ENCODE measurements at regions of chr4 and their contacts with region 1.

Region 1: GRCh38 chr4:56728512-56728911 is 47.4 kb upstream of the HOPX start:
- DNase-seq: no peak
- ATAC-seq: no peak
- H3K4me3 ChIP-seq: no peak overlapping the region
- H3K4me3 Mint-ChIP-seq: no peak overlapping the region
- H3K27ac ChIP-seq: no peak overlapping the region
- H3K27ac Mint-ChIP-seq: no peak overlapping the region
- H3K4me1 ChIP-seq: no peaks in the 10 kb centered on the region
- H3K4me1 Mint-ChIP-seq: peaks cover under 1% of the 10 kb centered on the region
- H3K27me3 ChIP-seq: no peaks in the 10 kb centered on the region
- H3K27me3 Mint-ChIP-seq: no peaks in the 10 kb centered on the region
- CTCF ChIP-seq: no peak

Region 2: GRCh38 chr4:56768316-56768715 is 39.8 kb after region 1 on chr4:
- CTCF ChIA-PET with region 1: no interaction called
- POLR2A ChIA-PET with region 1: interaction called, 3 read pairs
- intact Hi-C with region 1: loop called in 1 of 2 experiments (anchors 5 kb)
- DNase-seq: no peak
- ATAC-seq: no peak
- H3K4me3 ChIP-seq: no peak overlapping the region
- H3K4me3 Mint-ChIP-seq: no peak overlapping the region
- H3K27ac ChIP-seq: no peak overlapping the region
- H3K27ac Mint-ChIP-seq: no peak overlapping the region
- H3K4me1 ChIP-seq: no peaks in the 10 kb centered on the region
- H3K4me1 Mint-ChIP-seq: peaks cover 4% of the 10 kb centered on the region
- H3K27me3 ChIP-seq: no peaks in the 10 kb centered on the region
- H3K27me3 Mint-ChIP-seq: no peaks in the 10 kb centered on the region
- CTCF ChIP-seq: no peak

Region 3: DNA sequence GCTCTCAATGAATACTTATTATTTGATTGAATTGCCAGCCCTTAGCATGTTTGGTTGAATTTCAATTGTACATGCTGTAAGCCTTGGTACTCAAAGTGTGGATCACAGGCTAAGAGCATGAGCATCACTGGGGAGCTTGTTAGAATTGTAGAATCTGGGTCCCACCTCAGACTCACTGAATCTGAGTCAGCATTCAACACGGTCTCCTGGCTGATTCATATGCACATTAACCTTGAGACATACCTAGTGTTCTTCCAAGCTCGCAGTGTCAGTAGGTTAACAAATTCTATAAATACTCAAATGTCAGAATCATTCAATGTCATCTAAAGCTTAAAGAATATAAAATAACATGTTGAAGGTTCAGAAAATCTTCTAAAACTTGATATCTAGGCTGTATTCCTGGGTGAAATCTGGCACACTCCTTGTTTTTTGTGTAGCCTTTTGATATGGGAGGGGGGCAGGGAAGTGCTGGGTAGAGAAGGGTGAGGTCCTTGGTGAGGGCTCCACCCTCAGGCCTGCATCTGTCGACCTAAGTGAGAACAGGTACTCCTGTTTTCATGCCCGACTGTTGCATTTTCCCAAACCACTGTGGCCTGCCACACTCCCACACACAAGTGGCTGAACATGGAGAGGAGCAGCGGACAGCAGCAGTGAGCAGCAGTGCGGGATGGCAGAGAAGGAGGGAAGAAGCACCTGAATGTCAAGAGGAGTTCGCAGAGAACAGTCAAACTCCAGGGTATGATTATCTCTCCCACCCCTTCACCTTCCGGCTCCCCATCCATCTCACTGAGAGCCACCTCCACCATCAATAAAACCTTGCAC is 911.3 kb after region 1 on chr4:
- CTCF ChIA-PET with region 1: no interaction called
- POLR2A ChIA-PET with region 1: no interaction called
- intact Hi-C with region 1: no loop called
- DNase-seq: no peak
- ATAC-seq: no peak
- H3K4me3 ChIP-seq: no peak overlapping the region
- H3K4me3 Mint-ChIP-seq: no peak overlapping the region
- H3K27ac ChIP-seq: no peak overlapping the region
- H3K27ac Mint-ChIP-seq: no peak overlapping the region
- H3K4me1 ChIP-seq: no peaks in the 10 kb centered on the region
- H3K4me1 Mint-ChIP-seq: no peaks in the 10 kb centered on the region
- H3K27me3 ChIP-seq: no peaks in the 10 kb centered on the region
- H3K27me3 Mint-ChIP-seq: no peaks in the 10 kb centered on the region
- CTCF ChIP-seq: no peak

Measured in CD8-positive, alpha-beta T cell (primary cell).